Gastrocnemius medialis (tissue), 4 donors: ENCODE measurements at regions of chr9 and their contacts with region 1.

Region 1: GRCh38 chr9:33446946-33447798 is at the start of gene AQP3:
- DNase-seq: peak; percentile 32 to 43
- ATAC-seq: peak; percentile 78 to 82
- H3K4me3 ChIP-seq: peak within 1 kb of the TSS; percentile 49 to 78 (median 60)
- H3K27ac ChIP-seq: peak within 1 kb of the TSS in 3 of 4 donors; percentile 47 to 64 (median 48)
- H3K4me1 ChIP-seq: peaks cover 5 to 6% of the 10 kb centered on the region in 2 donors
- H3K27me3 ChIP-seq: no peaks in the 10 kb centered on the region
- CTCF ChIP-seq: peak in 2 of 5 experiments; percentile 13 to 32
- POLR2A ChIP-seq: no peak
- total RNA-seq, gene AQP3: 1.7 to 24.2 (median 13.5) TPM

Region 2: GRCh38 chr9:33506626-33507370 is 59.6 kb after region 1 on chr9:
- in situ Hi-C with region 1: no loop called
- intact Hi-C with region 1: loop called (anchors 10 kb)
- DNase-seq: no peak
- ATAC-seq: no peak
- H3K4me3 ChIP-seq: no peak overlapping the region
- H3K27ac ChIP-seq: no peak overlapping the region
- H3K4me1 ChIP-seq: peaks cover 0 to 5% of the 10 kb centered on the region in 2 donors
- H3K27me3 ChIP-seq: no peaks in the 10 kb centered on the region
- CTCF ChIP-seq: no peak
- POLR2A ChIP-seq: no peak